ENCODE measurements at regions of chr19 and their contacts with region 1.

Region 1: GRCh38 chr19:6632002-6632621 is 37.8 kb downstream of the TNFSF14 start:
- DNase-seq: no peak
- H3K4me3 ChIP-seq: no peak overlapping the region
- H3K27me3 ChIP-seq: no peaks in the 10 kb centered on the region
- CTCF ChIP-seq: peak; percentile 88

Region 2: GRCh38 chr19:6501740-6502648 is 130.1 kb before region 1 on chr19 and contains the start of gene TUBB4A:
- CTCF ChIA-PET with region 1: no interaction called
- POLR2A ChIA-PET with region 1: no interaction called
- DNase-seq: no peak
- H3K4me3 ChIP-seq: no peak within 1 kb of the TSS
- H3K27me3 ChIP-seq: peaks cover 6% of the 10 kb centered on the region
- CTCF ChIP-seq: no peak
- polyA plus RNA-seq, gene TUBB4A: not detected in 2 replicates

Region 3: DNA sequence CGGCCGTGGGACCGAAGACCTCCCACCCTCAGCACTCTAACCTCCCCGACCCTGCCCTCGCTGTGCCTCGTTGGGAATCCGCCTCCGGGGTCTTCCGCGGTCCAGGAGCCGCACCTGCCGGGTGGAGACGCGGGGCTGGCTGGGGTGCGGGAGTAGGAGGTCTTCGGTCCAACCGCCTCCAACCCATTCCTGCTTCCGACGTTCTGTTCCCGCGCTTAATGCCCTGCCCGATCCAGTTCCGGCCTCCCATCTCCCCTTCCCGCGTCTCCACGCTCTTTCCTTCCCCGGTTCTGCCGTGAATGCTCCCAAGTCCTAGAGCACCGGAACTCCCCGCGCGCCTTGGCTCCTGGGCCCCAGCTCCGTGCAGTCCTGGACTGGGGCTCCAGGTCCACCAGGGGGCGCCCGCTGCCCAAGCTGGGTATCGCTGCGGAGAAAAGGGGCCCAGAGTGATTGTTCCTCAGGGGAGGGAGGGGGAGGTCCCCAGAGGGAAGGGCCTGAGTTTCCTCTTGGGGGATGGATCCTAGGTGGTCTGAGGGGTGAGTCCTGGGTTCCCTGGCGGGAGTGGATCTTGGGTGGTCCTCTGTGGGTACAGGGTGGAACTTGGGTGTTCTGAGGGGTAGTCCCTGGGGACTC is 115.3 kb before region 1 on chr19:
- CTCF ChIA-PET with region 1: interaction called, 14 read pairs
- POLR2A ChIA-PET with region 1: no interaction called
- DNase-seq: no peak
- H3K4me3 ChIP-seq: peak overlapping the region; percentile 61
- H3K27me3 ChIP-seq: no peaks in the 10 kb centered on the region
- CTCF ChIP-seq: peak; percentile 99

Measured in BJ (cell line).